ENCODE measurements at regions of chr9 and their contacts with region 1.

Region 1: DNA sequence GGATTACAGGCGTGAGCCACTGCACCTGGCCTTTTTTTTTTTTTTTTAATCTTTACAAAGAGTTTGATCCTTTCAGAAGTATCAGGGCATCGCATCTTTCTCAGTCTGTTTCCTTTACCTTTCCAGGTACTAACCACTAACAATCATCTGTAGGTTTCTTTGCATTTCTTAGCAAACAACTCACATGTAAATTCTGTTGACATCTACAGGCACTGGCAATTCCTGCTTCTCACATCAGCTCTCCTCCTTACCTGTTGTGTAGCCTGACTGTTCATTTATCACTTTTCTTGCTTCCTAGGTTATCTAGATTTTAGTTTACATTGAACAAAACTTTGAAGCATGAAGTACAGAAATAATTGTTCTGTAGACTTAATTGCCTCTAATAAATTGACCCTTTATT is 27.5 kb upstream of the VPS13A start:
- DNase-seq: no peak
- ATAC-seq: no peak
- H3K4me3 ChIP-seq: no peak overlapping the region
- H3K4me3 Mint-ChIP-seq: no peak overlapping the region
- H3K27ac ChIP-seq: no peak overlapping the region
- H3K27ac Mint-ChIP-seq: no peak overlapping the region
- H3K4me1 ChIP-seq: no peaks in the 10 kb centered on the region
- H3K4me1 Mint-ChIP-seq: no peaks in the 10 kb centered on the region
- H3K27me3 ChIP-seq: peaks cover 0 to 6% (median 1%) of the 10 kb centered on the region in 4 experiments
- H3K27me3 Mint-ChIP-seq: peaks cover 10% of the 10 kb centered on the region
- CTCF ChIP-seq: no peak

Region 2: GRCh38 chr9:76443892-76444581 is 705.8 kb before region 1 on chr9:
- CTCF ChIA-PET with region 1: interaction called, 3 read pairs
- POLR2A ChIA-PET with region 1: no interaction called
- intact Hi-C with region 1: loop called (anchors 2 kb)
- DNase-seq: no peak
- ATAC-seq: no peak
- H3K4me3 ChIP-seq: no peak overlapping the region
- H3K4me3 Mint-ChIP-seq: no peak overlapping the region
- H3K27ac ChIP-seq: no peak overlapping the region
- H3K27ac Mint-ChIP-seq: no peak overlapping the region
- H3K4me1 ChIP-seq: peaks cover 3 to 5% of the 10 kb centered on the region in 2 donors
- H3K4me1 Mint-ChIP-seq: peaks cover 2% of the 10 kb centered on the region
- H3K27me3 ChIP-seq: no peaks in the 10 kb centered on the region
- H3K27me3 Mint-ChIP-seq: no peaks in the 10 kb centered on the region
- CTCF ChIP-seq: no peak

Region 3: DNA sequence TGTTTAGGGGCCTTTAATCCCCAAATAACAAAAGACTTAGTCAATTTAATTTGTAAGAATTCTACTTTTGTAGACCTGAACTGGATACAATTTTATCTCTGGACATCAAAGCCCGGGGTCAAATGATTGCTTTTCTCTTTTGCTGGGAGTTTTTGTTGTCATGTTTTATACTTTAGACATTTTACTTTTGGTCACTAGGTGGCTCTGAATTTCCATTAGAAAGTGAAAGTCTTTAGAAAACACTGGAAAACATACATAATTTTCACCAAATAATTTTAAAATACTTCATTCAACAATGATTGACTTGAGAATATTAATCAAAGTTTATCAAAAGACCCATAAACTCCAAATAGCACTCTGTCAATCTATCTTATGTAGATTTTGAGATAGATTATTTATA is 388.4 kb before region 1 on chr9:
- CTCF ChIA-PET with region 1: no interaction called
- POLR2A ChIA-PET with region 1: no interaction called
- intact Hi-C with region 1: loop called (anchors 2 kb)
- DNase-seq: no peak
- ATAC-seq: no peak
- H3K4me3 ChIP-seq: no peak overlapping the region
- H3K4me3 Mint-ChIP-seq: no peak overlapping the region
- H3K27ac ChIP-seq: no peak overlapping the region
- H3K27ac Mint-ChIP-seq: no peak overlapping the region
- H3K4me1 ChIP-seq: peaks cover 26 to 34% of the 10 kb centered on the region in 2 donors
- H3K4me1 Mint-ChIP-seq: peaks cover 40% of the 10 kb centered on the region
- H3K27me3 ChIP-seq: no peaks in the 10 kb centered on the region
- H3K27me3 Mint-ChIP-seq: peaks cover 2% of the 10 kb centered on the region
- CTCF ChIP-seq: no peak

Region 4: DNA sequence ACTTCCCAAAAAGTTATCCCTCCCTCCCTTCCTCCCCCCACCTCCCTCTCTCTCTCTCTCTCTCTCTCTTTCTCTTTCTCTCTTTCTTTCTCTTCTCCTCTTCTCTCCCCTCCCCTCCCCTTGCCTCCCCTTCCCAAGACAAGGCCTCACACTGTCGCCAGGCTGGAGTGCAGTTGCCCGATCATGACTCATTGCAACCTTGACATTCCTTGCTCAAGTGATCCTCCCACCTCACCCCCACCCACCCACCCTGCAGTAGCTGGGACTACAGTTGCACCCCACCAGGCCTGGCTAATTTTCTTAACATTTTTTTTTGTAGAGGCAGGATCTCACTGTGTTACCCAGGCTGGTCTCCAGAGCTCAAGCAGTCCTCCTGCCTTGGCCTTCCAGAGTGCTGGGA is 60.2 kb after region 1 on chr9:
- CTCF ChIA-PET with region 1: no interaction called
- POLR2A ChIA-PET with region 1: no interaction called
- intact Hi-C with region 1: no loop called
- DNase-seq: no peak
- ATAC-seq: no peak
- H3K4me3 ChIP-seq: no peak overlapping the region
- H3K4me3 Mint-ChIP-seq: no peak overlapping the region
- H3K27ac ChIP-seq: no peak overlapping the region
- H3K27ac Mint-ChIP-seq: no peak overlapping the region
- H3K4me1 ChIP-seq: no peaks in the 10 kb centered on the region
- H3K4me1 Mint-ChIP-seq: no peaks in the 10 kb centered on the region
- H3K27me3 ChIP-seq: no peaks in the 10 kb centered on the region
- H3K27me3 Mint-ChIP-seq: no peaks in the 10 kb centered on the region
- CTCF ChIP-seq: no peak

Region 5: GRCh38 chr9:77291714-77292113 is 141.8 kb after region 1 on chr9:
- CTCF ChIA-PET with region 1: no interaction called
- POLR2A ChIA-PET with region 1: no interaction called
- intact Hi-C with region 1: no loop called
- DNase-seq: no peak
- ATAC-seq: no peak
- H3K4me3 ChIP-seq: no peak overlapping the region
- H3K4me3 Mint-ChIP-seq: no peak overlapping the region
- H3K27ac ChIP-seq: no peak overlapping the region
- H3K27ac Mint-ChIP-seq: no peak overlapping the region
- H3K4me1 ChIP-seq: no peaks in the 10 kb centered on the region
- H3K4me1 Mint-ChIP-seq: no peaks in the 10 kb centered on the region
- H3K27me3 ChIP-seq: no peaks in the 10 kb centered on the region
- H3K27me3 Mint-ChIP-seq: no peaks in the 10 kb centered on the region
- CTCF ChIP-seq: no peak

Region 6: DNA sequence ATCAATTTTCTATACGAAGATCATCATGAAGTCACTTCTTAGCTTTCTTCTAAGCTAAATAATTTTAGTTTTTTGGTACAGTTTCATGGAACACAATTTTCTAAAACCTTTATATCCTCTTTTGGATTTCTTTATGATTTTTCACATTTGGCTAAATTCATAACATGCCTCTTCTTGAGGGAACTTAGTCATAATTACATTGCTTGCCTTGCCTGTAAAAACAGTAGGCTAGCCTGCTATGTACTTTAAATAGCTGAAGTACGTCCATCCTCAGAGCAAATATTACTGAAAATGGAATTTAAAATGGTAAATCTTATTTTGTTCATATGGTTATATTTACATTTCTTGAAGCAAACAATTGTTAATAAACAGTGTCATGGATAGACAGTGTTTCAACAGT is 252.4 kb after region 1 on chr9:
- CTCF ChIA-PET with region 1: no interaction called
- POLR2A ChIA-PET with region 1: no interaction called
- intact Hi-C with region 1: no loop called
- DNase-seq: no peak
- ATAC-seq: no peak
- H3K4me3 ChIP-seq: no peak overlapping the region
- H3K4me3 Mint-ChIP-seq: no peak overlapping the region
- H3K27ac ChIP-seq: no peak overlapping the region
- H3K27ac Mint-ChIP-seq: no peak overlapping the region
- H3K4me1 ChIP-seq: no peaks in the 10 kb centered on the region
- H3K4me1 Mint-ChIP-seq: no peaks in the 10 kb centered on the region
- H3K27me3 ChIP-seq: no peaks in the 10 kb centered on the region
- H3K27me3 Mint-ChIP-seq: no peaks in the 10 kb centered on the region
- CTCF ChIP-seq: no peak

Measured in B cell (primary cell).